Mammary epithelial cell (primary cell): ENCODE measurements at regions of chr1 and their contacts with region 1.

Region 1: GRCh38 chr1:59309795-59310548 is 13.1 kb downstream of the FGGY start:
- DNase-seq: no peak
- H3K4me3 ChIP-seq: no peak overlapping the region
- H3K27ac ChIP-seq: no peak overlapping the region
- H3K4me1 ChIP-seq: no peaks in the 10 kb centered on the region
- H3K27me3 ChIP-seq: no peaks in the 10 kb centered on the region
- CTCF ChIP-seq: no peak

Region 2: GRCh38 chr1:59367301-59368007 is 57.5 kb after region 1 on chr1:
- CTCF ChIA-PET with region 1: no interaction called
- dilution Hi-C with region 1: loop called (anchors 5 kb)
- in situ Hi-C with region 1: no loop called
- intact Hi-C with region 1: no loop called
- DNase-seq: peak; percentile 62
- H3K4me3 ChIP-seq: no peak overlapping the region
- H3K27ac ChIP-seq: peak overlapping the region; percentile 28
- H3K4me1 ChIP-seq: peaks cover 20% of the 10 kb centered on the region
- H3K27me3 ChIP-seq: no peaks in the 10 kb centered on the region
- CTCF ChIP-seq: no peak